ENCODE measurements at regions of chr2 and their contacts with region 1.

Region 1: GRCh38 chr2:189683363-189683762 is 8.9 kb downstream of the ANKAR start:
- DNase-seq: no peak
- H3K4me3 Mint-ChIP-seq: no peak overlapping the region
- H3K27ac Mint-ChIP-seq: no peak overlapping the region
- H3K4me1 Mint-ChIP-seq: peaks cover 20% of the 10 kb centered on the region
- H3K27me3 Mint-ChIP-seq: no peaks in the 10 kb centered on the region

Region 2: GRCh38 chr2:189698020-189698887 is 14.9 kb after region 1 on chr2:
- intact Hi-C with region 1: loop called (anchors 2 kb)
- DNase-seq: no peak
- H3K4me3 Mint-ChIP-seq: no peak overlapping the region
- H3K27ac Mint-ChIP-seq: no peak overlapping the region
- H3K4me1 Mint-ChIP-seq: peaks cover 3% of the 10 kb centered on the region
- H3K27me3 Mint-ChIP-seq: no peaks in the 10 kb centered on the region